Panc1 (cell line): ENCODE measurements at regions of chr16 and their contacts with region 1.

Region 1: DNA sequence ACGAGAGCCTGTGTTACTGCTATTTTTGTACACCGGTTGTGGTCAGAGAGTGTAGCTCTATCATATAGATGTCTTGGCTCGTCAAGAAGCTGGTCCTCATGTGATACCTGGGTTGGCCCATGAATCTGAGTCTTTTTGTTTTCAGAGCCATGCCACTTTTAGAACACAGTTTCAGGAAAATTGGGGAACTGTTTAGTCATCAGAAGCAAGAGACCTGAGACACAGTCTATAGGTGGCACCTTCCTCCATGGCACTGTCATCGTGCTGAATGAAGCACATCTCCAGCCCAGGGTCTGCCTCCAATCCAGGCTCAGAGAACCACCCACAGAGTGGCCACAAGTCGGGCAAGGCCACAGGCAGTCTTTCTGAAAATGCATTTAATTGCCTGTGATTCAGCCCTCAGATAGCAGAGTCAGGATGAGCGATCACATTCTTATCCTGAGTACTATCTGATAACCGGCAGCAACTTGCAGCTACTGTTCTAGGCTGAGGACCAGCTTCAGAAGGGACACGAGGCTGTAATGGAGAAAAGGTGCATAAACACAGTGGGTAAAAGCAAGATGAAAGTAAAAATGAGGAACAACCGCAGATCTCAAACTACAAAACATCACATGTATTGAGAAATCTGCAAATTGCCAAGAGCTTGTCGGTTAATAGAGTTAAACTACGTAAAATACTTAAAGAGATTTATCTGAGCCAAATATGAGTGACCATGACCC is 14.2 kb upstream of the HAPSTR1 start:
- DNase-seq: no peak
- ATAC-seq: peak; percentile 79
- H3K4me3 ChIP-seq: no peak overlapping the region
- H3K27ac ChIP-seq: peak overlapping the region; percentile 75
- H3K4me1 ChIP-seq: peaks cover 32% of the 10 kb centered on the region
- H3K27me3 ChIP-seq: no peaks in the 10 kb centered on the region
- CTCF ChIP-seq: no peak

Region 2: DNA sequence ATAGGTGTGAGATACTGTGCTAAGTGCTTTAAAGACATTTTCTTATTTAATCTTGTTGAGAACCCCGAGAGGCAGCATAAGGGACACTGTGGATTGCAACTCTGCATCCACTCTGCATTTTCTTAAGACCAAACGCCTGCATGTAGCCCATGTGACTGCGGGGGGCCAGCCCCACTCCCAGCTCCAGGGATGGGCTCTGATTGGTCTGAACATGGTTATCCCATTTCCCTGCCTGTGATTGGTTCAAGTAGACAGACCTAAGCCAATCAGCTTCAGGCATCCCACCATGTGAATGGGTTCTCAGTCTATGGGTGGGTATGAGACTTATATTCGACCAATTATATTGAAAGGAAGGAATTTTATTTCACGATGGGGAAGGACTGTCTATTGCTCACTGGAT is 80.4 kb before region 1 on chr16:
- CTCF ChIA-PET with region 1: no interaction called
- POLR2A ChIA-PET with region 1: interaction called, 12 read pairs
- in situ Hi-C with region 1: no loop called
- intact Hi-C with region 1: no loop called
- DNase-seq: no peak
- ATAC-seq: no peak
- H3K4me3 ChIP-seq: no peak overlapping the region
- H3K27ac ChIP-seq: no peak overlapping the region
- H3K4me1 ChIP-seq: no peaks in the 10 kb centered on the region
- H3K27me3 ChIP-seq: no peaks in the 10 kb centered on the region
- CTCF ChIP-seq: no peak